ENCODE measurements at regions of chr11 and their contacts with region 1.

Region 1: GRCh38 chr11:118435893-118436624 is at the start of gene KMT2A:
- DNase-seq: peak; percentile 92 to 94
- ATAC-seq: peak; percentile 75 to 81
- H3K4me3 ChIP-seq: peak within 1 kb of the TSS; percentile 92 to 97 (median 96)
- H3K27ac ChIP-seq: peak within 1 kb of the TSS; percentile 86 to 92 (median 90)
- H3K4me1 ChIP-seq: peaks cover 41 to 49% of the 10 kb centered on the region in 2 donors
- H3K27me3 ChIP-seq: no peaks in the 10 kb centered on the region
- CTCF ChIP-seq: peak in 4 of 5 experiments; percentile 17 to 100 (median 100)
- POLR2A ChIP-seq: peak; percentile 30 to 46
- total RNA-seq, gene KMT2A: 24.3 to 55.6 (median 27.9) TPM

Region 2: DNA sequence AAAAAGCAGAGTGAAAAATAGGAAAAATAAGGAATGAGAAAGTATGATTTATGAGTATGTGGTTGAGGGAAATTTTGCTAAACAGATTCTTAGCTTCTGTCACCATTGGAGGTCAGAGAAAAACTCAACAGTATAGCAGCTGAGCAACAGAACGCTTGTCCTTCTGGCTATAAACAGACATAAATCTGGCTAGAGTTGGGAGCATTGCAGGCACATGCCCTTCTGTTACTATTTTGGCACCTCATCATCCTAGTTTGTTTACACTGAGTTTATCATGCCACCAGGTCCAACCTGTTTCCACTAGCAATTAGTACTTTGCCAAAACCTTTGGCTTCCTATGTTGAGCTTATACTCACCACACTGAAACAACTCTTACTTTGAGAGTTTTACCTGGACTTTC is 69.8 kb before region 1 on chr11:
- in situ Hi-C with region 1: no loop called
- intact Hi-C with region 1: loop called (anchors 5 kb)
- DNase-seq: peak; percentile 38 to 46
- ATAC-seq: peak; percentile 99
- H3K4me3 ChIP-seq: no peak overlapping the region
- H3K27ac ChIP-seq: peak overlapping the region; percentile 78 to 89 (median 86)
- H3K4me1 ChIP-seq: peaks cover 33 to 36% of the 10 kb centered on the region in 2 donors
- H3K27me3 ChIP-seq: no peaks in the 10 kb centered on the region
- CTCF ChIP-seq: no peak
- POLR2A ChIP-seq: peak in 1 of 2 donors; percentile 64

Region 3: GRCh38 chr11:118418770-118419169 is 17.3 kb before region 1 on chr11:
- in situ Hi-C with region 1: no loop called
- intact Hi-C with region 1: no loop called
- DNase-seq: no peak
- ATAC-seq: no peak
- H3K4me3 ChIP-seq: no peak overlapping the region
- H3K27ac ChIP-seq: no peak overlapping the region
- H3K4me1 ChIP-seq: peaks cover 0 to 5% of the 10 kb centered on the region in 2 donors
- H3K27me3 ChIP-seq: no peaks in the 10 kb centered on the region
- CTCF ChIP-seq: no peak
- POLR2A ChIP-seq: no peak

Region 4: GRCh38 chr11:118462178-118462577 is 26.1 kb after region 1 on chr11:
- in situ Hi-C with region 1: no loop called
- intact Hi-C with region 1: no loop called
- DNase-seq: no peak
- ATAC-seq: no peak
- H3K4me3 ChIP-seq: no peak overlapping the region
- H3K27ac ChIP-seq: no peak overlapping the region
- H3K4me1 ChIP-seq: peaks cover 0 to 3% of the 10 kb centered on the region in 2 donors
- H3K27me3 ChIP-seq: no peaks in the 10 kb centered on the region
- CTCF ChIP-seq: no peak
- POLR2A ChIP-seq: no peak